ENCODE measurements at regions of chr6 and their contacts with region 1.

Region 1: DNA sequence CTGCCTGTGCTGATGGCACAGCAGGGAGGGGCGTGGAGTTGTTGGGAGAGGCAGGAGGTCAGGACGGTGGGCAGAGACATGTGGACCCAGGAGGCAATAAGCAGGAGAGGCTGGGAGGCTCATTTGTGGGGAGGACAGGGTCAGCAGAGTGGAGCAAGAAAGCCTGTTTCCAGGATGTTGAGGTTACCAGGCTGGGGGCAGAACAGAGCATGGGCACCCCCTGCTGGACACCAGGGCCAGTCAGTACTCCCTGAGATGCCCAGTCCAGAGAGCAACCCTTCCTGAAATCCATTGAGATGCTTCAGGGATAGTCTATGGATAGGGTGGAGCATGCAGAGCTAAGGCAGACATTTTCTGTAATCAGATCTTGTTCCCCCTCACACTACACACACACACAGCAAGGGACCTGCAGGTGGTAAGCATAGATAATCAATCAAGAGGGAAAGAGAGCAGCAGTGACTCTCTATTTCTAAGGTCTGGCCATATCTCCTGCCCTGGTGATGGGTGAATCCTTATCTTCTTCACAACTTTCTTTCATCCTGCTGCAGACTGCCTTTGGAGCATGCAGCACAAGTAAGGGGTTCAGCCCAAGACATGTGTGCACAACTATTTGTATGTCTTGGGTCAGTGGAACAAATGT is 41.7 kb downstream of the MOCS1 start:
- DNase-seq: peak; percentile 26 to 38
- ATAC-seq: peak; percentile 70 to 93; a peak in 4 of 6 replicates
- H3K4me3 ChIP-seq: no peak overlapping the region
- H3K27ac ChIP-seq: no peak overlapping the region
- H3K4me1 ChIP-seq: no peaks in the 10 kb centered on the region
- CTCF ChIP-seq: peak; percentile 27; the same call in 2 of the 3 replicates
- EP300 ChIP-seq: no peak
- POLR2A ChIP-seq: no peak
- RAD21 ChIP-seq: peak; percentile 48 to 68; a peak in 4 of 5 replicates

Region 2: GRCh38 chr6:39361657-39362486 is 530.7 kb before region 1 on chr6:
- CTCF ChIA-PET with region 1: interaction called, 12 read pairs
- POLR2A ChIA-PET with region 1: no interaction called
- DNase-seq: peak; percentile 51 to 53
- ATAC-seq: peak; percentile 89 to 96
- H3K4me3 ChIP-seq: no peak overlapping the region
- H3K27ac ChIP-seq: no peak overlapping the region
- H3K4me1 ChIP-seq: no peaks in the 10 kb centered on the region
- CTCF ChIP-seq: peak; percentile 45
- EP300 ChIP-seq: no peak
- POLR2A ChIP-seq: no peak
- RAD21 ChIP-seq: peak; percentile 60 to 72

Region 3: GRCh38 chr6:39909661-39910060 is 17.1 kb after region 1 on chr6:
- CTCF ChIA-PET with region 1: no interaction called
- POLR2A ChIA-PET with region 1: no interaction called
- DNase-seq: no peak
- ATAC-seq: no peak
- H3K4me3 ChIP-seq: no peak overlapping the region
- H3K27ac ChIP-seq: no peak overlapping the region
- H3K4me1 ChIP-seq: no peaks in the 10 kb centered on the region
- CTCF ChIP-seq: no peak
- EP300 ChIP-seq: no peak
- POLR2A ChIP-seq: no peak
- RAD21 ChIP-seq: no peak

Measured in A549 (cell line).